ENCODE measurements at regions of chr7 and their contacts with region 1.

Region 1: DNA sequence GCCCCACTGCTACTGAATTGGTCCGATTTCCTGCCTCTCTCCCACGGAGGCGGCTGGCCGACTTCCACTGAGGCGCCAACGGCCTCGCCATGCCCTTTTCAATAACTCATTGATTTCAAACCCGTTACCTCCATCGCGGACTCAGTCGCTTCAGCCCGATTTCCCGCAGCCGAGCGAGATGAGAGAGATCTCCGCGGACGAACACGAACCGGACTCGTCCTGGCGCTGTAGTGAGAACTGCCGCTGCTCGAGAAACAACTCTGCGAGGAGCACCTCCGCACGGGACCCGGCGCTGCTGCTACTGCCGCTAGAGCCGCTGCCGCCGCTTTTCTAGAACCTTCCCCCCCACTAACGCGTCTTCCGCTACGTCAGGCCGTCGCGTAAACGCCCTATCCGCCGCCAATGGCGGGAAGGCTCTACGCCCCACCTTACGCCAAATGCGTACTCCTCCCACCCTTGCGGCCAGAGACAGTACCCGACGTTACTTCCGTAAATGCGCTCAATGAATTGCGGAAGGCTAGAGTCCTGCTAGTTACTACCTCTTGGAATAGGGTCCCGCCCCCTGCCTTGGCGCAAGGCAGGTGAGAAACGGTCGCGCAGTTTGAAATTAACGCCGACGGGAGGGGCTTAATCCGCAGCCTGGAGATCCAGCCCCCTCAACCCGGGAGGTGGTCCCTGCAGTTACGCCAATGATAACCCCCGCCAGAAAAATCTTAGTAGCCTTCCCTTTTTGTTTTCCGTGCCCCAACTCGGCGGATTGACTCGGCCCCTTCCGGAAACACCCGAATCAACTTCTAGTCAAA is at the start of gene HNRNPA2B1:
- DNase-seq: peak; percentile 98
- ATAC-seq: peak; percentile 75
- H3K4me3 ChIP-seq: peak within 1 kb of the TSS; percentile 98
- H3K27ac ChIP-seq: peak within 1 kb of the TSS; percentile 96
- H3K4me1 ChIP-seq: 0 out of 2 replicates have a peak, but pooled peaks cover 3% of the 10 kb centered on the region
- H3K27me3 ChIP-seq: no peaks in the 10 kb centered on the region
- CTCF ChIP-seq: no peak
- EP300 ChIP-seq: no peak
- POLR2A ChIP-seq: peak; percentile 100
- RAD21 ChIP-seq: no peak
- polyA plus RNA-seq, gene HNRNPA2B1: 726 to 1,124 TPM

Region 2: DNA sequence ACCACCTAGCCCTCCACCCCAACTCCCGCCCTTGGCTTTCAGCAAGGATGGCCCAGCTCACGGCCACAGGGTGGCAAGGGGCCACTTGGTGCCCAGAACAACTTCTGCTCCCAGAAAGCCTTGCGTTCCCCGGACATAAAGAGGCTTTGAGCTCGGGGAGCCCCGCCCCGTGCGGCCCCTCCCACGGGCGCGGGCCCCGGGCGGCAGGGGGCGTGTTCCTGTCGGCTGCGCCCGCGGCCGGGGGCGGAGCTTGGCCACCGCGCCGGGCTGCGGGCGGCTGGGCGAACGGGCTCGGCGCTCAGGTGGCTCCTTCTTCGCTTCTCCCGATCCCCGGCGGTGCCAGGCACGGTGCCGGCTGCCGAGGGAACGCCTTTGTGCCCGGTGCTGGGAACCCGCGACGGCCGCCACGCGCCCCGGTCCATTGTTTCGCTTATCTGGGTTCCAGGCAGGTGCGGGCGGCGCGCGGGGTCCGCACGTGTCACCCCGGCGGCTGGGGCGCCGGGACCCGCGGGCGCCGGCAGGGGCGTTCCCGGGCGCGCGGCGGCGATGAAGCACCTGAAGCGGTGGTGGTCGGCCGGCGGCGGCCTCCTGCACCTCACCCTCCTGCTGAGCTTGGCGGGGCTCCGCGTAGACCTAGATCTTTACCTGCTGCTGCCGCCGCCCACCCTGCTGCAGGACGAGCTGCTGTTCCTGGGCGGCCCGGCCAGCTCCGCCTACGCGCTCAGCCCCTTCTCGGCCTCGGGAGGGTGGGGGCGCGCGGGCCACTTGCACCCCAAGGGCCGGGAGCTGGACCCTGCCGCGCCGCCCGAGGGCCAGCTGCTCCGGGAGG is 48.5 kb before region 1 on chr7 and contains the start of gene NFE2L3:
- CTCF ChIA-PET with region 1: interaction called, 104 read pairs
- POLR2A ChIA-PET with region 1: interaction called, 206 read pairs
- RAD21 ChIA-PET with region 1: interaction called, 164 read pairs
- SMC1A ChIA-PET with region 1: interaction called, 198 read pairs
- in situ Hi-C with region 1: no loop called
- intact Hi-C with region 1: loop called (anchors 2 kb)
- DNase-seq: no peak
- ATAC-seq: peak; percentile 75
- H3K4me3 ChIP-seq: peak within 1 kb of the TSS; percentile 72
- H3K27ac ChIP-seq: peak within 1 kb of the TSS; percentile 88
- H3K4me1 ChIP-seq: peaks cover 23% of the 10 kb centered on the region
- H3K27me3 ChIP-seq: no peaks in the 10 kb centered on the region
- CTCF ChIP-seq: peak; percentile 6 to 17 (median 9); a peak in 1 of 6 replicates
- EP300 ChIP-seq: no peak
- POLR2A ChIP-seq: peak; percentile 82
- RAD21 ChIP-seq: no peak
- polyA plus RNA-seq, gene NFE2L3: 4.9 to 8.9 TPM

Region 3: DNA sequence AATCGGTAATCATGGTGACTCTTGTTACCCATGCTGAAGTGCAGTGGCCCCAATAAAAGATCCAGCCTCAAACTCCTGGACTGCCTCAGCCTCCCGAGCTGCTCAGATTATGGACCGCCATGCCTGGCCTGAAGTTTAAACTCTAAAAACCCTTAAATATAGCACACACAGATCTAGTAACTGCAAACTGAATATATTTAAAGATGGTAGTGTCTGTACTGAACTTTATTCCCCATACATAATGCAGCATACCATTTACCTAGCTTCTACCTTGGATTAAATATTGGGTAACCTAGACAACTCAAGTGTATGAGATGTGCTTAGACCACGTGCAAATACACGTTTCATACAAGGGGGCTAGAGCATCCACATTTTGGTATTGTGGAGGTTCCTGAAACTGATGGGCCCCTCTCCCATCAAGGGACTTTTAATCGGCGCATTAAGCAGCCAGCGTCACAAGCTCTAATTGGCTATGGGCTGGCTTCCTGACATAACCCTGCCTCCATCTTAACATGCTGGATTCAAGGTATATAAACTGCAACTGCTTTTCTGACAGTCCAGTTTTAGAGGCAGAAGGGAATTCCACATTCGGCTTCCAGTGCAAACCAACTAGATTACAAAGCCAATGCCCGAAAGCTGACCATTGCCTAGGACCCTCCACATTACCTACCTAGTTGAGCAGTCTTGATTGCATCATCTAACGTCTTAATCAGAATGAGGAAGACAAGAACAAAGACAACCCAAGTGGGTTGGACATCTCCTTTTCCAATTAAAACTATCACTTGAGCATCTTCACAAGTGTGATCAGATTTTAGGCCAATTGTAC is 13.1 kb before region 1 on chr7:
- CTCF ChIA-PET with region 1: interaction called, 23 read pairs
- POLR2A ChIA-PET with region 1: interaction called, 9 read pairs
- RAD21 ChIA-PET with region 1: interaction called, 13 read pairs
- SMC1A ChIA-PET with region 1: interaction called, 25 read pairs
- in situ Hi-C with region 1: no loop called
- intact Hi-C with region 1: no loop called
- DNase-seq: no peak
- ATAC-seq: peak; percentile 23
- H3K4me3 ChIP-seq: no peak overlapping the region
- H3K27ac ChIP-seq: no peak overlapping the region
- H3K4me1 ChIP-seq: peaks cover 12% of the 10 kb centered on the region
- H3K27me3 ChIP-seq: no peaks in the 10 kb centered on the region
- CTCF ChIP-seq: no peak
- EP300 ChIP-seq: no peak
- POLR2A ChIP-seq: peak; percentile 75
- RAD21 ChIP-seq: no peak

Region 4: GRCh38 chr7:26291699-26292538 is 91.3 kb after region 1 on chr7 and contains the start of gene SNX10:
- CTCF ChIA-PET with region 1: interaction called, 12 read pairs
- POLR2A ChIA-PET with region 1: interaction called, 8 read pairs
- RAD21 ChIA-PET with region 1: interaction called, 8 read pairs
- SMC1A ChIA-PET with region 1: interaction called, 10 read pairs
- in situ Hi-C with region 1: loop called (anchors 5 kb)
- intact Hi-C with region 1: loop called (anchors 2 kb)
- DNase-seq: no peak
- ATAC-seq: peak; percentile 80
- H3K4me3 ChIP-seq: peak within 1 kb of the TSS; percentile 98
- H3K27ac ChIP-seq: peak within 1 kb of the TSS; percentile 87
- H3K4me1 ChIP-seq: peaks cover 16% of the 10 kb centered on the region
- H3K27me3 ChIP-seq: no peaks in the 10 kb centered on the region
- CTCF ChIP-seq: peak; percentile 54 to 84 (median 54); a peak in 5 of 6 replicates
- EP300 ChIP-seq: no peak
- POLR2A ChIP-seq: peak; percentile 66; the same call in 1 of the 2 replicates
- RAD21 ChIP-seq: peak; percentile 67
- polyA plus RNA-seq, gene SNX10: 22.9 to 29.7 TPM

Region 5: DNA sequence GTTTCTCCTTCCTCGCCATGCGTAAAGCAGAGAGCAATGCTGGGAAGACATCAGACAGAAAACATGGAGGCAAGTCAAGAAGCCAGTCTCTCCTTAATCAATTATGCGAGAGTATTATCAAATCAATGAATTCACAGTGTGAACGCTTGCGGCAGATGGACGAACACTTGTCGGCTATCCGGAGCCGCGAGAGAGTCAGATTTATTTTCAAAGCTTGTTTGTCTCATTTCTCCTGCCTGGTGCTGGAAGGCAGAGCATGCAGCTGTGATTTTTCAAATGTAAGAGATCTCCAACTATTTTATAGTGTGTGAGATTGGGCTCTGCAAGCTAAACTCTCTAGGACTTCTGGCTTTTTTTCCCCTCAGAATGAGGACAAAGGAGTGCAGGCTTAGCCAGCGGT is 343.3 kb after region 1 on chr7:
- CTCF ChIA-PET with region 1: no interaction called
- POLR2A ChIA-PET with region 1: no interaction called
- RAD21 ChIA-PET with region 1: no interaction called
- SMC1A ChIA-PET with region 1: no interaction called
- in situ Hi-C with region 1: no loop called
- intact Hi-C with region 1: no loop called
- DNase-seq: no peak
- ATAC-seq: no peak
- H3K4me3 ChIP-seq: no peak overlapping the region
- H3K27ac ChIP-seq: no peak overlapping the region
- H3K4me1 ChIP-seq: no peaks in the 10 kb centered on the region
- H3K27me3 ChIP-seq: peaks cover 5% of the 10 kb centered on the region in 2 experiments; a peak in 3 of 4 replicates
- CTCF ChIP-seq: no peak
- EP300 ChIP-seq: no peak
- POLR2A ChIP-seq: no peak
- RAD21 ChIP-seq: no peak

Region 6: DNA sequence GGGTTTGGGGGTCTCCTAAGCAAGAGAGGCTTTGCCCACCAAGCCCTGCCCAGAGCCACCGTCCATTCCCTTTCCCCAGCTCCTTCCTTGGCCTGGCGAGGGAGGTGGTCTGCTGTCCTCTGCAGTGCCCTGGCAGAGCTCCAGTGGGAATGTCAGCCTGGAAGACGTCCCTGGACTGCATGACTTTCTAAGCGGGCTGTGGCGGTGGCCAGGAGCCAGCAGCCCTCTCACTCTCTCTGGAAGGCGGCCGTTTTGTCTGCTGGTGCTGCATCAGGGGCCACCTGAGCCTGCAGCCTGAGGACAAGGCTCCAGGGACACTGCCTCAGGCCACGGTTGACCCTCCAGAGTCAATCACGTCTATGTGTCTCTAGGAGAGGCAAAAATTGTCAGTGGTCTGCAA is 392.7 kb after region 1 on chr7:
- CTCF ChIA-PET with region 1: no interaction called
- POLR2A ChIA-PET with region 1: no interaction called
- RAD21 ChIA-PET with region 1: no interaction called
- SMC1A ChIA-PET with region 1: no interaction called
- in situ Hi-C with region 1: no loop called
- intact Hi-C with region 1: no loop called
- DNase-seq: no peak
- ATAC-seq: no peak
- H3K4me3 ChIP-seq: no peak overlapping the region
- H3K27ac ChIP-seq: no peak overlapping the region
- H3K4me1 ChIP-seq: no peaks in the 10 kb centered on the region
- H3K27me3 ChIP-seq: no peaks in the 10 kb centered on the region; a peak in 1 of 4 replicates
- CTCF ChIP-seq: no peak
- EP300 ChIP-seq: no peak
- POLR2A ChIP-seq: no peak
- RAD21 ChIP-seq: no peak

Region 7: GRCh38 chr7:26667500-26668133 is 467.0 kb after region 1 on chr7:
- CTCF ChIA-PET with region 1: no interaction called
- POLR2A ChIA-PET with region 1: no interaction called
- RAD21 ChIA-PET with region 1: no interaction called
- SMC1A ChIA-PET with region 1: no interaction called
- in situ Hi-C with region 1: no loop called
- intact Hi-C with region 1: loop called (anchors 10 kb)
- DNase-seq: peak; percentile 36
- ATAC-seq: peak; percentile 82
- H3K4me3 ChIP-seq: no peak overlapping the region
- H3K27ac ChIP-seq: no peak overlapping the region
- H3K4me1 ChIP-seq: no peaks in the 10 kb centered on the region
- H3K27me3 ChIP-seq: no peaks in the 10 kb centered on the region
- CTCF ChIP-seq: peak; percentile 64 to 91 (median 80); a peak in 5 of 6 replicates
- EP300 ChIP-seq: no peak
- POLR2A ChIP-seq: no peak
- RAD21 ChIP-seq: peak; percentile 78